ENCODE measurements at regions of chr11 and their contacts with region 1.

Region 1: DNA sequence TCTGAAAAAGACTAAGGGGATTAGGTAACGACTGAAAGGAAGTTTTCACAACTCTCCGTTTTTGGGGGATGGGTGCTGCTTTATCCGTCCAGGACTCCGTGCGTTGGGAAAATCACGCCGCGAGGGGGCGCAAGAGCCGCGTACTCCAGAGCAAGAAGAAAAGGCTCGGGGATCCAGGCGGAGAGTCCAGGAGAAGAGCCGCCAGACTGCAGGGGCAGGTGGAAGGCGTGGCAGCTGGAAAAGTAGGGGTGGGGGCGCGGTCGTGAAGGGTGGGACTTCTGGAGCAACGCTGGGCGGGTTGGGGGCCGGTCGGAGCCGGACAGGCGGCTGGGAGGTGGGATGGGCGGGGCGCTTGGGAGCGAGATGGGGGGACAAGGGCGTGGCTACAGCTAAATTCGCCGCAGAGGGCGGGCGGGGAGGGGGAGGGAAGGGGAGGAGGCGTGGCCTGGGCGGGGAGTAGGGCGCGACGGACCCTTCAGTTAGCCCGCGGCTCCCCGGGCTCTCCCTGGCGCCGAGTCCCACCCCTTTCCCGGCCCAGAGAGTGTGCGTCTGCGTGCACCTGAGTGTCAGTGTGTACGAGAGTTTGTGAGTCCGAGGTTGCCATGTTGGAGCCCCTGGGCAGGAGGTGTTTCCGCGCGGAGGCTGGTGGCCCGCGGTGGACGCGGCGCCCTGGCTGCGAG is 613 bp upstream of the ARHGEF17 start:
- DNase-seq: peak; percentile 99
- H3K4me3 ChIP-seq: peak overlapping the region; percentile 66 to 77 (median 72)
- H3K27ac ChIP-seq: peak overlapping the region; percentile 57
- H3K4me1 ChIP-seq: peaks cover 23% of the 10 kb centered on the region
- H3K27me3 ChIP-seq: no peaks in the 10 kb centered on the region
- CTCF ChIP-seq: peak; percentile 85 to 87
- POLR2A ChIP-seq: peak; percentile 54

Region 2: GRCh38 chr11:72885749-72886609 is 421.5 kb before region 1 on chr11:
- CTCF ChIA-PET with region 1: no interaction called
- POLR2A ChIA-PET with region 1: no interaction called
- dilution Hi-C with region 1: no loop called
- intact Hi-C with region 1: no loop called
- DNase-seq: no peak
- H3K4me3 ChIP-seq: no peak overlapping the region
- H3K27ac ChIP-seq: no peak overlapping the region
- H3K4me1 ChIP-seq: no peaks in the 10 kb centered on the region
- H3K27me3 ChIP-seq: no peaks in the 10 kb centered on the region
- CTCF ChIP-seq: no peak
- POLR2A ChIP-seq: no peak

Region 3: GRCh38 chr11:73325036-73325981 is 17.8 kb after region 1 on chr11:
- CTCF ChIA-PET with region 1: interaction called, 53 read pairs
- POLR2A ChIA-PET with region 1: interaction called, 14 read pairs
- dilution Hi-C with region 1: no loop called
- intact Hi-C with region 1: loop called (anchors 1 kb)
- DNase-seq: no peak
- H3K4me3 ChIP-seq: no peak overlapping the region
- H3K27ac ChIP-seq: no peak overlapping the region
- H3K4me1 ChIP-seq: peaks cover 44% of the 10 kb centered on the region
- H3K27me3 ChIP-seq: no peaks in the 10 kb centered on the region
- CTCF ChIP-seq: no peak
- POLR2A ChIP-seq: no peak

Region 4: DNA sequence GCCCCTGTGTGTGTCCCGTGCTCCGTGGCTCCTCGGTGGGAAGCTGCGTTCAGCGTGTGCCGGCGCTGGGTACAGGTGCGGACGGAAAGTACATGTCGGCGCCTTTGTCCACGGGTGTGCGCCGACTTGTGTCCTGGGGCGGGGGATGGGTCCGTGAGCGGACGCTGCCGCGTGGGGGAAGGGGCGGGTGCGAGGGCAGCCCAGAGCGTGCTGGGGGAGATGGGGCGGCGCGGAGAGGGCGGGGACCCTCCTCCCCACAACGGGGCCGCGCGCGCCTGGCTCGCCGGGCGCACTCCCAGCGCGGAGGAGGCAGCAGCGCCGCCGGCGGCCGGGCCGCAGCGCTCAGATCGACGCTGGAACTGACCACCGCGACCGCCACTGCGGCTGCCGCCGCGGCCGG is 35.2 kb after region 1 on chr11:
- CTCF ChIA-PET with region 1: interaction called, 455 read pairs
- POLR2A ChIA-PET with region 1: no interaction called
- dilution Hi-C with region 1: no loop called
- intact Hi-C with region 1: no loop called
- DNase-seq: no peak
- H3K4me3 ChIP-seq: no peak overlapping the region
- H3K27ac ChIP-seq: no peak overlapping the region
- H3K4me1 ChIP-seq: no peaks in the 10 kb centered on the region
- H3K27me3 ChIP-seq: no peaks in the 10 kb centered on the region
- CTCF ChIP-seq: no peak
- POLR2A ChIP-seq: no peak

Region 5: DNA sequence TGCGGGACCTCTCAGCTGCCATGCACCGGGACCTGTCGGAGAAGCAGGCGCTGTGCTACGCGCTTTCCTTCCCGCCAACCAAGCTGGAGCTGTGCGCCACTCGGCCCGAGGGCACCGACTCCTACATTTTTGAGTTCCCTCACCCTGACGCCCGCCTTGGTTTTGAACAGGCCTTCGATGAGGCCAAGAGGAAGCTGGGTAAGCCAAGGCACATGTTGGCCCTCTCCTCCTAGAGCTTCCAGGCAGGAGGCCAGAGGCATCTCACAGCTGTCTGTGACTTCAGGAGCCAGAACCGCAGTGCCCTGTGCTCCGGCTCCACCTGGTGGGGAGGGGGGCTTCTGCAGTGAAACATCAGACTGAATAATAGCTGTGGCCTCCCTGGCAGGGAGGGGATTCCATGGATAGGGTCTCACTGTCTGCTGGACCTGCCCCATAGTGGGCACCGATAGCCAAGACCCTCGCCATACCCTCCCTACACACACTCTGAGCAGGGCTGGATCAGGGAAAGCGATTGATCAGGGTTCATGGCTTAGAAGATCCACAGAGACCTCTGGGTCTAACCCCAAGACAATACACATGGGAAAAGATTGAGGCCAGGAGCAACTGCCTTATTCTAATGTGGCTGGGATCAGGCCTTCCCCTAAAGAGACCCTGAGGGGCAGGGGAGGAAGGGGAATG is 53.0 kb after region 1 on chr11:
- CTCF ChIA-PET with region 1: interaction called, 18 read pairs
- POLR2A ChIA-PET with region 1: no interaction called
- dilution Hi-C with region 1: no loop called
- intact Hi-C with region 1: no loop called
- DNase-seq: peak; percentile 36
- H3K4me3 ChIP-seq: no peak overlapping the region
- H3K27ac ChIP-seq: no peak overlapping the region
- H3K4me1 ChIP-seq: no peaks in the 10 kb centered on the region
- H3K27me3 ChIP-seq: no peaks in the 10 kb centered on the region
- CTCF ChIP-seq: peak; percentile 36 to 60
- POLR2A ChIP-seq: no peak

Region 6: GRCh38 chr11:73661035-73661628 is 353.7 kb after region 1 on chr11:
- CTCF ChIA-PET with region 1: interaction called, 11 read pairs
- POLR2A ChIA-PET with region 1: interaction called, 4 read pairs
- dilution Hi-C with region 1: no loop called
- intact Hi-C with region 1: loop called (anchors 2 kb)
- DNase-seq: peak; percentile 84
- H3K4me3 ChIP-seq: peak overlapping the region in 2 of 3 experiments; percentile 26 to 32
- H3K27ac ChIP-seq: no peak overlapping the region
- H3K4me1 ChIP-seq: peaks cover 6% of the 10 kb centered on the region
- H3K27me3 ChIP-seq: no peaks in the 10 kb centered on the region
- CTCF ChIP-seq: peak; percentile 96 to 98
- POLR2A ChIP-seq: no peak